CD8-positive, alpha-beta T cell (primary cell): ENCODE measurements at regions of chr5 and their contacts with region 1.

Region 1: DNA sequence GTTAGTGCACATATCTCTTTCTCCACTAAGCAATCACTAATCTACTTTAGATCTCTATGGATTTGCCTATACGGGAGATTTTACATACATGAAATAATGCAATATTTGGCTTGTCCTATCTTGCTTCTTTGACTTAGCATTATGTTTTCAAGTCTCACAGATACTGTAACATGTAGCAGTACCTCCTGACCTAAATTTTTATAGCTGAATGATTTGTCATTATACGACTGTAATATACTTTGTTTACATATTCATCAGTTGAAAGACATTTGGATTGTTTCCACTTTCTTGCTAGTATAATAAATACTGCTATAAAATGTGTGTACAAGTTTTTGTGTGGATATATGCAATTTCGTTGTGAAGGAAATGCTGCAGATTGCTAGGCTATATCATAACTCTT is 1520.8 kb upstream of the CDH6 start:
- DNase-seq: no peak
- ATAC-seq: no peak
- H3K4me3 ChIP-seq: no peak overlapping the region
- H3K4me3 Mint-ChIP-seq: no peak overlapping the region
- H3K27ac ChIP-seq: no peak overlapping the region
- H3K27ac Mint-ChIP-seq: no peak overlapping the region
- H3K4me1 ChIP-seq: no peaks in the 10 kb centered on the region
- H3K4me1 Mint-ChIP-seq: no peaks in the 10 kb centered on the region
- H3K27me3 ChIP-seq: no peaks in the 10 kb centered on the region
- H3K27me3 Mint-ChIP-seq: no peaks in the 10 kb centered on the region
- CTCF ChIP-seq: no peak

Region 2: GRCh38 chr5:29414681-29415080 is 258.0 kb before region 1 on chr5:
- CTCF ChIA-PET with region 1: no interaction called
- POLR2A ChIA-PET with region 1: no interaction called
- intact Hi-C with region 1: no loop called
- DNase-seq: no peak
- ATAC-seq: no peak
- H3K4me3 ChIP-seq: no peak overlapping the region
- H3K4me3 Mint-ChIP-seq: no peak overlapping the region
- H3K27ac ChIP-seq: no peak overlapping the region
- H3K27ac Mint-ChIP-seq: no peak overlapping the region
- H3K4me1 ChIP-seq: no peaks in the 10 kb centered on the region
- H3K4me1 Mint-ChIP-seq: no peaks in the 10 kb centered on the region
- H3K27me3 ChIP-seq: no peaks in the 10 kb centered on the region
- H3K27me3 Mint-ChIP-seq: no peaks in the 10 kb centered on the region
- CTCF ChIP-seq: no peak

Region 3: GRCh38 chr5:29516224-29516623 is 156.5 kb before region 1 on chr5:
- CTCF ChIA-PET with region 1: no interaction called
- POLR2A ChIA-PET with region 1: no interaction called
- intact Hi-C with region 1: no loop called
- DNase-seq: no peak
- ATAC-seq: no peak
- H3K4me3 ChIP-seq: no peak overlapping the region
- H3K4me3 Mint-ChIP-seq: no peak overlapping the region
- H3K27ac ChIP-seq: no peak overlapping the region
- H3K27ac Mint-ChIP-seq: no peak overlapping the region
- H3K4me1 ChIP-seq: no peaks in the 10 kb centered on the region
- H3K4me1 Mint-ChIP-seq: no peaks in the 10 kb centered on the region
- H3K27me3 ChIP-seq: no peaks in the 10 kb centered on the region
- H3K27me3 Mint-ChIP-seq: no peaks in the 10 kb centered on the region
- CTCF ChIP-seq: no peak

Region 4: DNA sequence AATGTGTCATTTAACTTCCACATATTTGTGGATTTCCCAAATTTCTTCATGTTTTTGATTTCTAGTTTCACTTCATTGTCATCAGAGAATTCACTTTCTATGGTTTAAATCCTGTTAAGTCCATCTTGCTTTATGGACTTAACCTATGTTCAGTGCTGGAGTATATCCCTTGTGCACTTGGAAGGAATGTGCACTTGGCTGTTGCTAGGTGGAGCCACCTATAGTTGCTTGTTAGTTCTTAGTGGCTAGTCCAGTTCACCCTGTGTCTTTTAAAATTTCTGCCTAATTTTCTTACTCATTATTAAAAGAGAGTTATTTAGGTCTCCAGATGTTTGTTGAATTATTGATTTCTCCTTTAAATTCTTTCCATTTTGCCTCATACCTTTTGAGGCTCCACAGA is 48.3 kb after region 1 on chr5:
- CTCF ChIA-PET with region 1: no interaction called
- POLR2A ChIA-PET with region 1: no interaction called
- intact Hi-C with region 1: loop called in 1 of 2 experiments (anchors 1 kb)
- DNase-seq: no peak
- ATAC-seq: no peak
- H3K4me3 ChIP-seq: no peak overlapping the region
- H3K4me3 Mint-ChIP-seq: no peak overlapping the region
- H3K27ac ChIP-seq: no peak overlapping the region
- H3K27ac Mint-ChIP-seq: no peak overlapping the region
- H3K4me1 ChIP-seq: no peaks in the 10 kb centered on the region
- H3K4me1 Mint-ChIP-seq: no peaks in the 10 kb centered on the region
- H3K27me3 ChIP-seq: no peaks in the 10 kb centered on the region
- H3K27me3 Mint-ChIP-seq: no peaks in the 10 kb centered on the region
- CTCF ChIP-seq: no peak